Heart right ventricle (tissue), 16 donors: ENCODE measurements at regions of chr21 and their contacts with region 1.

Region 1: GRCh38 chr21:43716376-43717165 is 2.4 kb upstream of the PDXK start:
- DNase-seq: no peak
- ATAC-seq: no peak
- H3K4me3 ChIP-seq: no peak overlapping the region
- H3K27ac ChIP-seq: no peak overlapping the region
- H3K4me1 ChIP-seq: peaks cover 9 to 33% (median 25%) of the 10 kb centered on the region in 9 donors
- H3K27me3 ChIP-seq: no peaks in the 10 kb centered on the region
- CTCF ChIP-seq: no peak

Region 2: DNA sequence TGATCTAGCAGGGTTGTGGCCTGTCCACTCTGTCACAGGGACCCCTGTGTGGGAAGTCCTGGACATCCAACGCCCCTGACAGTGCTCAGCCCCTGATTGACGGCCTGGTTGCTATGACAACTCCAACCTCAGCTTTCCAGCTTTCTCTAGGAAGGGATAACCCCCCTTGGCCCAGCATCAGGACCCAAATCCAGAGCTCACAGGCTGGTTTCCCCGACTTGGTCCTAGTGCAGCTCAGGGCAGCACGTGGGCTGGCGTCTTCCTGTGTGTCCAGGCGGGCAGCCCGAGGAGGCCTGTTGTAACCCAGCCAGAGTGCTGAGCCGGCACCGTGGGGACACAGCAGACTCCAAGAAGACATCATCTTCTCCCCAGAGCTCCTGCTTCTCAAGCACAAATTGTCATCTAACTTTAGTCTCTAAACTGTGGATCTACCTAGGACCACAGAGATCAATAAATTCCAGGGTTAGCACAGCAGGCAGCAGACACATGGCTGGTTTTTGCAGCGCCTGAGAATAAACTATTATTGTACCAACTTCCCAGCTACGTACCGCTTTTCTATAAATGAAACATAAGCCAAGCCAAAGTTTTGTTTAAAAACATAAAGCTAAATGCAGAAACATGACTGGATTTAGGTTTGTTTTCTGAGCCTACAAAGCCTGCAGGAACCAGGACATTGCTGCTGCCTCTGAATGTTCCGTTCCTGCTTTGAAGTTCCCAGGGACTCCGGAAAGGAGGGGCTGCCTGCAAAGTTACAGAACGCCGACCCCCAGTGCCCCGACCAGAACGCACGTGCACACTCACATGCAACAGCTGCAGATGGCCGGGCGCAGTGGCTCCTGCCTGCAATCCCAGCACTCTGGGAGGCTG is 16.3 kb before region 1 on chr21:
- intact Hi-C with region 1: loop called in 1 of 10 experiments (anchors 2 kb)
- DNase-seq: no peak
- ATAC-seq: no peak
- H3K4me3 ChIP-seq: no peak overlapping the region
- H3K27ac ChIP-seq: no peak overlapping the region
- H3K4me1 ChIP-seq: peaks cover 2 to 19% (median 13%) of the 10 kb centered on the region in 9 donors
- H3K27me3 ChIP-seq: no peaks in the 10 kb centered on the region
- CTCF ChIP-seq: no peak

Region 3: GRCh38 chr21:43740497-43741156 is 24.1 kb after region 1 on chr21:
- intact Hi-C with region 1: no loop called
- DNase-seq: no peak
- ATAC-seq: peak in 5 of 8 donors; percentile 13 to 68 (median 32)
- H3K4me3 ChIP-seq: peak overlapping the region in 1 of 10 donors; percentile 18
- H3K27ac ChIP-seq: peak overlapping the region in 1 of 10 donors; percentile 44
- H3K4me1 ChIP-seq: peaks cover 0 to 5% (median 0%) of the 10 kb centered on the region in 9 donors
- H3K27me3 ChIP-seq: no peaks in the 10 kb centered on the region
- CTCF ChIP-seq: no peak

Region 4: GRCh38 chr21:43959231-43960116 is 242.9 kb after region 1 on chr21:
- intact Hi-C with region 1: no loop called
- DNase-seq: no peak
- ATAC-seq: peak in 1 of 8 donors; percentile 21
- H3K4me3 ChIP-seq: no peak overlapping the region
- H3K27ac ChIP-seq: no peak overlapping the region
- H3K4me1 ChIP-seq: peaks cover 0 to 21% (median 15%) of the 10 kb centered on the region in 9 donors
- H3K27me3 ChIP-seq: no peaks in the 10 kb centered on the region
- CTCF ChIP-seq: no peak